ENCODE measurements at regions of chr1 and their contacts with region 1.

Region 1: DNA sequence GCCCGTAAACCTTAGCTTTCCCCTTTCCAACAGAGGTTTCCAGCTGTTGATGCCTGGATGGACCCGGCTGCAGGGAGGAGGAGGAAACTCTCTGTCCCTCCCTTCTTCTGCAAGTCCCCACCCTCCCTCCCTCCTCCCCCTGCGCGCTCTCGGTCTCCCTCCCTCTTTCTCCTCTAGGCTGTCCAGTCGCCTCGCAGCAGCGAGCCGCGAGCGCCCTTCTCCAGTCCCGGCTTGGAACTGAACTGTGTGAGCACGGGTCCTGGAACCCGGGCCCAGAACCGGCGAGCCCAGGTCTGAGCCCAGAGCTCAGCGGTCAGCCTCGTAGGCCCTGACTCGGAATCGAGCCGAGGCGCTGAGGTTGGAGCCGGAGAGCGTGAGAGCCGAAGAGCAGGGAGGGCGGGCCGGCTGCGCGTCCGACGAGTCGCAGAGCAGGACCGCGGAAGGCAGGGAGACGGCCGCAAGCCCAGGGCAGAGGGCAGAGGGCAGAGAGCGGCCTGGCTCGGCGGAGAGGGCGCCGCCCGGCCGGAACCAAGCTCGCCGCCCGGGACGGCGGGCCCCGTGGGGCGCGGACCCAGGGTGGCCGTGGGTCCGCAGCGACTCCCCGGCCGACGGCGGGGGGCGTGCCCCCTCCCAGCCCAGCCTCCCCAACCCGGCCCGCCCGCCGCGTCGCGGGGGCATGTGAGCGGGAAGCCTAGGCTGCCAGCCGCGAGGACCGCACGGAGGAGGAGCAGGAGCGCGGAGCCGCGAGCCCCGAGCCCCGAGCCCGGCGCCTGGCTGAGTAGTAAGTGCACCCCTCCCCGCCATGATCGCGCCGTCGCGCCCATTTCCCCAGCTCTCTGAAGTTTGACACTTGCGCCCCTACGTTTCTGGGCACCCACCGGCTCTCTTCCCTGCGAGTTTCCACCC is at the start of gene SOX13:
- DNase-seq: peak; percentile 91 to 94
- ATAC-seq: peak; percentile 89
- H3K4me3 ChIP-seq: peak within 1 kb of the TSS; percentile 70 to 89
- H3K27ac ChIP-seq: peak within 1 kb of the TSS in 1 of 2 donors; percentile 82
- H3K4me1 ChIP-seq: no peaks in the 10 kb centered on the region
- H3K27me3 ChIP-seq: no peaks in the 10 kb centered on the region
- total RNA-seq, gene SOX13: 40.9 to 52.8 TPM

Region 2: GRCh38 chr1:204128964-204129896 is 56.0 kb after region 1 on chr1:
- intact Hi-C with region 1: loop called (anchors 2 kb)
- DNase-seq: peak; percentile 76 to 91
- ATAC-seq: peak; percentile 86
- H3K4me3 ChIP-seq: no peak overlapping the region
- H3K27ac ChIP-seq: no peak overlapping the region
- H3K4me1 ChIP-seq: no peaks in the 10 kb centered on the region
- H3K27me3 ChIP-seq: no peaks in the 10 kb centered on the region